ENCODE measurements at regions of chr20 and their contacts with region 1.

Region 1: GRCh38 chr20:10090588-10091166 is 55.9 kb downstream of the ANKEF1 start:
- DNase-seq: peak in 1 of 2 experiments; percentile 19
- H3K4me3 ChIP-seq: no peak overlapping the region
- H3K27ac ChIP-seq: no peak overlapping the region
- H3K4me1 ChIP-seq: peaks cover 0 to 3% (median 0%) of the 10 kb centered on the region in 4 experiments; a peak in 1 of 7 replicates
- H3K27me3 ChIP-seq: no peaks in the 10 kb centered on the region
- CTCF ChIP-seq: peak; percentile 39 to 77 (median 73)
- EP300 ChIP-seq: no peak
- POLR2A ChIP-seq: no peak
- RAD21 ChIP-seq: peak; percentile 83 to 88

Region 2: DNA sequence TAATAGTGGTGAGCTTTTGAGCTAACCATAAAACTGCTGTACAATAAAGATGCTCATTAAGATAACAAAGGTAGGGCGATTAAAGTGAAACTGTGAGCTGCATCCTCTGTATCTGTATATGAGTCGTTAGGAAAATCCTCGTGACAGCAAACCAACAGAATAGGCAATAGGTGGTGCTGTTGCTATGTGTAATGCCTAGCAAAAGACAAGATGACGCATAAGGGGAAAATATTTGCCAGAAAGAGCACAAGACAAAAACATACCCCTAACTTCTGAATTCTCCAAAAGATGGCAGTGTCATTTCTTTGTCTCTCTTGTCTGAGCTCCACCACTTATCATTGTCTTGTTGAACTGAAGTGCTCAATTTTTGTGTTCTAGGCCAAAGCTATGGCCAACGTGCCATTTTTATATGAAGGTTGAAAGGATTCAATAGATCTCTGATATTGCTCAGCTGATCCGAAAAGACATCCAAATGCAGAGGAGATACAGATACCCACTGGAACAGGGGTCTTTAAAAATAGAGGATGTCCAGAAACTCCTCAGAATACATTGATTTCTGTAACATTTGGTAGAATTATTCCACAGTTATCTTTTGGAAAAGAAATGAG is 112.2 kb before region 1 on chr20:
- CTCF ChIA-PET with region 1: interaction called, 100 read pairs
- POLR2A ChIA-PET with region 1: no interaction called
- DNase-seq: no peak
- H3K4me3 ChIP-seq: no peak overlapping the region
- H3K27ac ChIP-seq: no peak overlapping the region
- H3K4me1 ChIP-seq: no peaks in the 10 kb centered on the region
- H3K27me3 ChIP-seq: no peaks in the 10 kb centered on the region
- CTCF ChIP-seq: peak in 2 of 3 experiments; percentile 78 to 79; a peak in 3 of 4 replicates
- EP300 ChIP-seq: no peak
- POLR2A ChIP-seq: no peak
- RAD21 ChIP-seq: peak; percentile 96 to 97

Region 3: GRCh38 chr20:10047427-10047826 is 43.2 kb before region 1 on chr20:
- CTCF ChIA-PET with region 1: interaction called, 11 read pairs
- POLR2A ChIA-PET with region 1: no interaction called
- DNase-seq: peak; percentile 17 to 57
- H3K4me3 ChIP-seq: no peak overlapping the region
- H3K27ac ChIP-seq: no peak overlapping the region
- H3K4me1 ChIP-seq: no peaks in the 10 kb centered on the region
- H3K27me3 ChIP-seq: no peaks in the 10 kb centered on the region
- CTCF ChIP-seq: peak; percentile 55 to 73 (median 72)
- EP300 ChIP-seq: no peak
- POLR2A ChIP-seq: no peak
- RAD21 ChIP-seq: peak; percentile 51 to 58

Region 4: DNA sequence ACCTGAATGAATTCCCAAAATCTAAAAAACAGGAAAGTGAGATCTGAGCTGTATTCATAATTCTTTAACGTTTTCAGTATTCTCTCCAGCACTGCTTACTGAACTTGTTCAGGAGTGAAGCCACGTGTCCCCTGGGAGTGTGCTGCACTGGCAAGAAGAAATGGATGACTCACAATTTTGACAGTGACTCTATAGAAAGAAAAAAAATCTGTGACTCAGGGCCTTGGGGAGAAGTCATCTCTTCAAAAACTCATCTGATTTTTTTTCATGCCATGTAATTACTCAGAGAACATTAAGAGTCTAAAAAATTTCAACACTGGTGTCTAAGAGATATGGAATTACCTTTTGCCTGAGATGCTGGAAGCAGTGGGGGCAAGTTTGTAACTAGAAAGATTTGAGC is 16.2 kb before region 1 on chr20:
- CTCF ChIA-PET with region 1: interaction called, 84 read pairs
- POLR2A ChIA-PET with region 1: no interaction called
- DNase-seq: no peak
- H3K4me3 ChIP-seq: no peak overlapping the region
- H3K27ac ChIP-seq: no peak overlapping the region
- H3K4me1 ChIP-seq: no peaks in the 10 kb centered on the region
- H3K27me3 ChIP-seq: peaks cover 0 to under 1% (median 0%) of the 10 kb centered on the region in 4 experiments; a peak in 1 of 7 replicates
- CTCF ChIP-seq: no peak
- EP300 ChIP-seq: no peak
- POLR2A ChIP-seq: no peak
- RAD21 ChIP-seq: no peak

Region 5: DNA sequence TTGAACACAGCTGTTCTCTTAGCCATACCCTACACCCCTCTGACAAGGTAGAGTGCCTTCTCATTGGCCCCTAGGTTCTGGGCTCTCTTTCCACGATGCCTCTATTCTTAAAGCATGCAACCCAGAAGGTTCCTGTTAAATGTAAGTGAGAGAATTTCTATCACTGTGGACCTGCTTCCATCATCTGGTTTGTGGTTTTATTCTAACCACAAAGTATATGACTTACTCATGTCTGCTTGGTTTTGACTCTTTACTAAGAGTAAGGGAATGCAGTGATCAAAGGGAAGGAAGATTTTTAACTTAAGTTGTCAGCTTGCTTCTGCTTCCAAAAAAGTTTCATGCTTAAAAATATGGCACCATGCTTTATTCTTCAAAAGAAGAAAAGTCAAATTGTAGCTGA is 24.3 kb after region 1 on chr20:
- CTCF ChIA-PET with region 1: interaction called, 10 read pairs
- POLR2A ChIA-PET with region 1: no interaction called
- DNase-seq: no peak
- H3K4me3 ChIP-seq: no peak overlapping the region
- H3K27ac ChIP-seq: no peak overlapping the region
- H3K4me1 ChIP-seq: no peaks in the 10 kb centered on the region
- H3K27me3 ChIP-seq: no peaks in the 10 kb centered on the region
- CTCF ChIP-seq: no peak
- EP300 ChIP-seq: no peak
- POLR2A ChIP-seq: no peak
- RAD21 ChIP-seq: no peak

Region 6: GRCh38 chr20:10157549-10157948 is 66.9 kb after region 1 on chr20:
- CTCF ChIA-PET with region 1: interaction called, 12 read pairs
- POLR2A ChIA-PET with region 1: no interaction called
- DNase-seq: no peak
- H3K4me3 ChIP-seq: no peak overlapping the region
- H3K27ac ChIP-seq: no peak overlapping the region
- H3K4me1 ChIP-seq: no peaks in the 10 kb centered on the region
- H3K27me3 ChIP-seq: no peaks in the 10 kb centered on the region
- CTCF ChIP-seq: no peak
- EP300 ChIP-seq: no peak
- POLR2A ChIP-seq: no peak
- RAD21 ChIP-seq: no peak

Region 7: GRCh38 chr20:10179574-10180298 is 89.1 kb after region 1 on chr20:
- CTCF ChIA-PET with region 1: interaction called, 16 read pairs
- POLR2A ChIA-PET with region 1: no interaction called
- DNase-seq: peak in 1 of 2 experiments; percentile 52
- H3K4me3 ChIP-seq: no peak overlapping the region
- H3K27ac ChIP-seq: no peak overlapping the region
- H3K4me1 ChIP-seq: no peaks in the 10 kb centered on the region
- H3K27me3 ChIP-seq: no peaks in the 10 kb centered on the region; a peak in 1 of 7 replicates
- CTCF ChIP-seq: peak; percentile 57 to 81 (median 64)
- EP300 ChIP-seq: no peak
- POLR2A ChIP-seq: no peak
- RAD21 ChIP-seq: peak; percentile 50 to 63

Measured in H1 (cell line).